ENCODE measurements at regions of chr17 and their contacts with region 1.

Region 1: DNA sequence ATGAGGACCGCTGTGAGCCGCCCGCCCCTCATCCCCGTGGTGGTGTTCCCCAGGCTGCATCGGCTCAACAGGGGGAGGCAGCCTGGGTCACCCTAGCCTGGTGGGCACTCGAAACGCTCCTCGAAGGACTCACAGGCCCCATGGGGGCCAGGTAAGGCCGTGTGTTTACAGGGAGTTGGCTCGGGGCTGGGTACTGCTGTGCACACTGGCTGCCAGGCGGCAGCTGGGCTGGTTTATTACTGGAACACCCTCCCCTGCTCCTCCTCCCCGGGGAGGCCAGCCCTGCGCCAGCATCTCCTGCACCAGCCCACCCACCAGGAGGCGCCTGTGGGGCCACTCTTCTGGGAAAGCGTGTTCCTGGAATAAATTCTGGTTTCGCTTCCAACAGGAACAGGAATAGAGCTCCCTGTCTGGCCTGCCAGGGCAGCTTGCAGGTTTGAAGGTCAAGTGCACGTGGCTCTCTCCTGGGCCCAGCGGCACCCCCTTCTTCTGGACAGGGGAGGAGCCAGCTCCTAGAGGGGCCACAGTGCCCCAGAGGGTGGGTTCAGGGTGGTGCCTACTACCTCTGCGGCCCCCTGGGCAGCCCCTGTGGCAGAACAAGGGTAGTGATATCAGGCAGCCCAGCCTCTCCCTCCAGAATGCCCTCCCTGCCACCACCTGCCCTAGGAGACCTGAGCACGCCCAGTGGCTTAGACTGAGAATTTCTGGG is 11.3 kb downstream of the MCRIP1 start:
- DNase-seq: peak; percentile 84
- ATAC-seq: peak; percentile 84
- H3K4me3 ChIP-seq: peak overlapping the region in 1 of 3 experiments; percentile 40; a peak in 1 of 6 replicates
- H3K27ac ChIP-seq: peak overlapping the region; percentile 53
- H3K4me1 ChIP-seq: peaks cover 37% of the 10 kb centered on the region
- H3K27me3 ChIP-seq: no peaks in the 10 kb centered on the region; a peak in 2 of 5 replicates
- CTCF ChIP-seq: peak; percentile 90
- EP300 ChIP-seq: peak in 1 of 2 experiments; percentile 29; a peak in 1 of 4 replicates
- POLR2A ChIP-seq: no peak
- RAD21 ChIP-seq: peak; percentile 91

Region 2: GRCh38 chr17:81711814-81712467 is 109.8 kb before region 1 on chr17 and contains the start of gene SLC25A10:
- CTCF ChIA-PET with region 1: no interaction called
- POLR2A ChIA-PET with region 1: interaction called, 16 read pairs
- in situ Hi-C with region 1: no loop called
- intact Hi-C with region 1: no loop called
- DNase-seq: peak; percentile 89
- ATAC-seq: peak; percentile 56
- H3K4me3 ChIP-seq: peak within 1 kb of the TSS; percentile 87 to 95 (median 92)
- H3K27ac ChIP-seq: peak within 1 kb of the TSS; percentile 93
- H3K4me1 ChIP-seq: peaks cover 32% of the 10 kb centered on the region
- H3K27me3 ChIP-seq: no peaks in the 10 kb centered on the region; a peak in 1 of 5 replicates
- CTCF ChIP-seq: no peak; the same call in 1 of the 2 replicates
- EP300 ChIP-seq: peak; percentile 41 to 88; a peak in 2 of 4 replicates
- POLR2A ChIP-seq: peak in 1 of 2 experiments; percentile 45; a peak in 1 of 4 replicates
- RAD21 ChIP-seq: peak; percentile 79
- total RNA-seq, gene SLC25A10: 111 and 140 TPM in 2 replicates

Region 3: GRCh38 chr17:81794509-81794908 is 27.2 kb before region 1 on chr17:
- CTCF ChIA-PET with region 1: no interaction called
- POLR2A ChIA-PET with region 1: no interaction called
- in situ Hi-C with region 1: no loop called
- intact Hi-C with region 1: no loop called
- DNase-seq: no peak
- ATAC-seq: peak; percentile 98
- H3K4me3 ChIP-seq: no peak overlapping the region; a peak in 1 of 6 replicates
- H3K27ac ChIP-seq: no peak overlapping the region
- H3K4me1 ChIP-seq: peaks cover 19% of the 10 kb centered on the region
- H3K27me3 ChIP-seq: peaks cover 1 to 12% of the 10 kb centered on the region in 2 experiments; a peak in 4 of 5 replicates
- CTCF ChIP-seq: no peak
- EP300 ChIP-seq: no peak
- POLR2A ChIP-seq: no peak
- RAD21 ChIP-seq: no peak

Region 4: DNA sequence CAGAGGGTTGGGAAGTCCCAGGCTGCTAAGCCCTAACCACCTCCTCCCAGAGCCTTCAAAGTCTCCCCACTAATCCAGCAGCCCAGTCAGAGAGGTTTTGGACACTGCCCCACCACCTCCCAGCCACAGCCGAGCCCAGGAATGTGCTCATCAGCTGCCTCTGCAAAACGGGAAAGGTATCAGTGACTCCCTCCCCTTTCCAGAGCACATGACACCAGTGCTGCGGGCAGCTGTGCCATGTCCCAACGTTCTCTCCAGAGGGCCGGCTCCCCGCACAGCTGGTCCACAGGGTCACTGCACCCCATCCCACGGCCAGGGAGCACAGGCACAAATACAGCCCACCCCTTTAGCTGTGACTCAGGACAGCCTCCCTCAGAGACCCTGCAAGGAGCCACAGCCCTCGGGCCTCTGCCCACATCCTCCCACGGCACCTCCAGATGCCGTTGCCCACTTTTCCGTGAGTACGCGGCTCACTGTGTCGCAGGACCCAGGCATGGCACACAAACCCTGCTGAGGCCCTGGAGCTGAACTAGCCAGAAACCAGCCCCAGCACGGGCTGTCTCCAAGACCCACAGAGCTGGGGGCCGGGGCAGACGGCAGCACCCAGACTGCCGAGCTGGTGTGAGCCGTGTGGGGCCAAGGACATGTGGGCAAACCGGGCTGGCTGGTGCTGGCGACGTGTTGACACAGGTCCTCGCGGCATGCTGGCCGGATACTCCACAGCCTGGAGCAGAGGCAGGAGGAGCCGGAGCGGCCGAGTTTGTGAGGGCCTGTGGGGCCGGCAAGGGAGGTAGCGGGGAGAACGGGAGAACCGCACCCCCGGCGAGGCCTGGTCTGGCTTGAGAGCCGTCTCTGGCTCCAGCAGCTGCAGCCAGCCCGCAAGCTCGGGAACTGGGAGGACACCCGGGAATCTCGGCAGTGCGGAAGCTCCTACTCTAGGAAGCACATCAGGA is 19.3 kb after region 1 on chr17:
- CTCF ChIA-PET with region 1: no interaction called
- POLR2A ChIA-PET with region 1: interaction called, 12 read pairs
- in situ Hi-C with region 1: no loop called
- intact Hi-C with region 1: no loop called
- DNase-seq: no peak
- ATAC-seq: peak; percentile 53
- H3K4me3 ChIP-seq: no peak overlapping the region; a peak in 1 of 6 replicates
- H3K27ac ChIP-seq: no peak overlapping the region
- H3K4me1 ChIP-seq: peaks cover 40% of the 10 kb centered on the region
- H3K27me3 ChIP-seq: no peaks in the 10 kb centered on the region
- CTCF ChIP-seq: no peak
- EP300 ChIP-seq: no peak
- POLR2A ChIP-seq: no peak
- RAD21 ChIP-seq: 0 out of 2 replicates have a peak, but pooled peaks have one; percentile 10

Region 5: GRCh38 chr17:81902023-81902652 is 80.4 kb after region 1 on chr17 and contains the start of gene NPB:
- CTCF ChIA-PET with region 1: no interaction called
- POLR2A ChIA-PET with region 1: no interaction called
- in situ Hi-C with region 1: no loop called
- intact Hi-C with region 1: no loop called
- DNase-seq: no peak
- ATAC-seq: peak; percentile 22
- H3K4me3 ChIP-seq: peak within 1 kb of the TSS; percentile 17 to 65 (median 35); a peak in 4 of 6 replicates
- H3K27ac ChIP-seq: peak within 1 kb of the TSS; percentile 28
- H3K4me1 ChIP-seq: peaks cover 16% of the 10 kb centered on the region
- H3K27me3 ChIP-seq: no peaks in the 10 kb centered on the region
- CTCF ChIP-seq: no peak
- EP300 ChIP-seq: no peak
- POLR2A ChIP-seq: no peak
- RAD21 ChIP-seq: peak; percentile 46
- total RNA-seq, gene NPB: 0.56 and 0.93 TPM in 2 replicates

Region 6: DNA sequence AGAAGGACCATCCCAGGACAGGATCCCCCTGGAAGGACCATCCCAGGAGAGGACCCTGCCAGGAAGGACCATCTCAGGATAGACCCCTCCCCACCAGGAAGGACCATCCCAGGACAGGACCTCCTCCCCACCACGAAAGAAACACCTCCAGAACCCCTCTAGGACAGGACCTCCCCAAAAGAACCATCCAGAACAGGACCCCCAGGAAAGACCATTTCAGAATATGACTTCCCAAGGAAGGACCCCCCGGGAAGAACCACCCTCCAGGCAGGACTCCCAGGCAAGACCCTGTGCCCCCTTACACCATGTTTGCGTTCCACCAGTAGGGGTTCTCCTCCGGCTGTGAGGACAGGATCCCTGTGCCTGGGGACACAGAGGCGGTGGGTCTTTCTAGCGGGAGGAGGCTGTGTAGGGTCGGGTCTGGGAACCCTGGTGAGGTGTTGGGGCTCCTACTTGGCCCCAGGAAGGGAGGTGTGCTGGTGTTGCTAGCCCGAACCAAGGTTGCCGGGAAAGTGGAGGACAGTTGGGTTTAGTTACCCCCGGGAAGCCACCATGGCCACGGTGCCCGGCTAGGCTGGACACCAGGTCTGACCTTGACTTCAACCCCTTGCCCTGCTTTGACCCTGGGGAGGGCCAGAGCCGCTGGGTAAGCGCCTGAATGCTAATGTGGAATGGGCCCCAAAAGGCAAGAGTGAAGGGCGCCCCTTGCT is 137.0 kb after region 1 on chr17:
- CTCF ChIA-PET with region 1: no interaction called
- POLR2A ChIA-PET with region 1: no interaction called
- in situ Hi-C with region 1: no loop called
- intact Hi-C with region 1: no loop called
- DNase-seq: no peak
- ATAC-seq: no peak
- H3K4me3 ChIP-seq: peak overlapping the region; percentile 95 to 97 (median 96)
- H3K27ac ChIP-seq: peak overlapping the region; percentile 86
- H3K4me1 ChIP-seq: peaks cover 70% of the 10 kb centered on the region
- H3K27me3 ChIP-seq: no peaks in the 10 kb centered on the region; a peak in 1 of 5 replicates
- CTCF ChIP-seq: peak; percentile 29; the same call in 1 of the 2 replicates
- EP300 ChIP-seq: no peak
- POLR2A ChIP-seq: peak in 1 of 2 experiments; percentile 7; a peak in 1 of 4 replicates
- RAD21 ChIP-seq: no peak